A673 (cell line): ENCODE measurements at regions of chr16 and their contacts with region 1.

Region 1: DNA sequence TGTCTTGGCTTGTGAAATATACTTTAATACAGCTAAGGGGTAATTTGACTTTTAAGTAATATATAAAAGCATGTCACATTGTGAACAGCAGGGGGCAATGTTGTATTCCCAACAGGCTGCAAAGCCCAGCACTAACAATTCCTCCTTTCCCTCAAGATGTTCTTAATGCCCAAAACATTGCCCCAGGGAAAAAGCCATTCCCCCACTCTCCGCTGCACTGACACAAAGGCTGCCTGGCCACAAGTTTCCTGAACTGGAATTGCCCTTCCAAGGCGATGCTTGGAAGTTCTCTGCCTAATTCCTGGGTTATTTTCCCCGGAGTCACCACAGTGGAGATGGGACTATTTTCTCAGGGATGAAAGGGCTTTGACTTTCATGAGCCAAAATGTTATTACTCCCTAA is 27.2 kb downstream of the CLEC16A start:
- DNase-seq: peak; percentile 86
- H3K4me3 ChIP-seq: no peak overlapping the region
- H3K27ac ChIP-seq: no peak overlapping the region
- H3K4me1 ChIP-seq: no peaks in the 10 kb centered on the region
- H3K27me3 ChIP-seq: no peaks in the 10 kb centered on the region
- CTCF ChIP-seq: peak; percentile 75

Region 2: GRCh38 chr16:11356573-11357331 is 385.2 kb after region 1 on chr16:
- CTCF ChIA-PET with region 1: interaction called, 4 read pairs
- POLR2A ChIA-PET with region 1: no interaction called
- intact Hi-C with region 1: loop called (anchors 2 kb)
- DNase-seq: peak; percentile 82
- H3K4me3 ChIP-seq: no peak overlapping the region
- H3K27ac ChIP-seq: no peak overlapping the region
- H3K4me1 ChIP-seq: peaks cover 29% of the 10 kb centered on the region
- H3K27me3 ChIP-seq: no peaks in the 10 kb centered on the region
- CTCF ChIP-seq: peak; percentile 87